Uterus (tissue), 4 donors: ENCODE measurements at regions of chr10 and their contacts with region 1.

Region 1: DNA sequence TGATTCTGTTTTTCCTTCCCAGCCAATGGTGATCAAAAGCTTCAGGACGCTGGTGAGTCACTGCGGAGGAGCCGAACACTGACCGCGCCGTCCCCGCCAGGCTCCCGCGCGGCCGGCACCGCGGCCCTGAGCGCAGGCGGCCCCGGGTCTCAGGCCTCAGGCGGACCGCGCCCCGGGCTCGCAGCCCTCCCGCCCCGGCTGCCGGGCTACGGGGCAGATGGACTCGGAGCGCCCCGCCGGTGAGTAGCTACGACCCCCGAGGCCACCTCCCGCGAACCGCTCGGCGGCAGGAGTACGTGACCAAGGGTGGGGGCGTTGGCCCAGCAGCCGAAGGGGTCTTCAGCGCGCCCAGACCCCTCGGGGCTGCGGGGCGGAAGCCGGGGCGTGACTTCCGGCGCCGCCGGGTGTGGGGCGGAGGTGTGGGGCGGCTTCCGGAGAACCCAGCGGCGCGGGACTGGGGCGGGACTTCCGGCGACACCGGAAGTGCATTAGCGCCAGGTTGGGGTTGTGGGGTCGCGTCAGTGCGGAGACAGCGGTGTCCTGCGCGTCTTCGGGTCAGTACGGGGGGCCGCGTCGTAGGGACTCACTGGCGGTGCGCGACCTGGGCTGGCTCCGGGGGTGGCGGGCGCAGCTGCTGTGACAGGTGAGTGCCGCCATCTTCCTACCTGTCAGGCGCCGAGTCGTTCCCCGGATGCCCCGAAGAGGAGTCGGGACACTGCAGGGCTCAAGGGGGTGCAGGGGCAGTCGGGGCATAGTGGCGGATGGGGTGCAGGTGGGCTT is at the start of gene WDR37:
- DNase-seq: peak; percentile 80 to 86
- H3K4me3 ChIP-seq: peak within 1 kb of the TSS; percentile 88 to 99
- H3K27ac ChIP-seq: peak within 1 kb of the TSS; percentile 97 to 98
- H3K4me1 ChIP-seq: peaks cover 0 to 7% of the 10 kb centered on the region in 2 donors
- H3K27me3 ChIP-seq: no peaks in the 10 kb centered on the region
- CTCF ChIP-seq: peak in 1 of 4 experiments; percentile 28
- POLR2A ChIP-seq: peak; percentile 36 to 76
- total RNA-seq, gene WDR37: 1.3 to 21.7 (median 11.2) TPM

Region 2: GRCh38 chr10:987870-988666 is 68.4 kb before region 1 on chr10 and contains the start of gene GTPBP4:
- intact Hi-C with region 1: loop called (anchors 10 kb)
- DNase-seq: peak; percentile 98
- H3K4me3 ChIP-seq: peak within 1 kb of the TSS; percentile 78 to 97
- H3K27ac ChIP-seq: peak within 1 kb of the TSS; percentile 84 to 90
- H3K4me1 ChIP-seq: peaks cover 4 to 13% of the 10 kb centered on the region in 2 donors
- H3K27me3 ChIP-seq: no peaks in the 10 kb centered on the region
- CTCF ChIP-seq: peak in 2 of 4 experiments; percentile 20 to 46
- POLR2A ChIP-seq: peak; percentile 26 to 64
- total RNA-seq, gene GTPBP4: 10.5 to 49.0 (median 20.1) TPM